ENCODE measurements at regions of chr1 and their contacts with region 1.

Region 1: GRCh38 chr1:37673920-37674319 is 18.4 kb upstream of the CDCA8 start:
- DNase-seq: no peak
- ATAC-seq: no peak
- H3K4me3 ChIP-seq: no peak overlapping the region
- H3K27ac ChIP-seq: no peak overlapping the region
- H3K4me1 ChIP-seq: no peaks in the 10 kb centered on the region
- H3K27me3 ChIP-seq: peaks cover 49% of the 10 kb centered on the region
- CTCF ChIP-seq: no peak
- POLR2A ChIP-seq: no peak
- RAD21 ChIP-seq: no peak

Region 2: DNA sequence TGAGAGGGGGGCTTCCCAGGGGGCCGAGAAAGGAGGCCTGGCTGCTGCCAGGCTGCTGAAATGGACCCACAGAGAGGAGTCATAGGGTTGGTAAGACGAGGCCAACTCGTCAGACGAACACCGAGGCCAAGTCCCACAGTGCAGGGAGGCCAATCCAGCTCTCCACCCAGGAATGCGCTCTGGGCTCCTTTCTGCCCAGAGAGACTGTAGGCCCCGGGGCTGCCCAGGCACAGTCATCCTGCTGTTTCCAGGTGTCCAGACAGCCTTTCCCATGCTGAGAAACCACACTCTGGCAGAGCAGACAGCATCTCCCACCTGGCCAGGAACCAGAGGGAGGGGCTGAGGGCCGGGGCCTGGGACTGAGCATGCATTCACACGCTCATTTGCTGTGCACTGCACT is 12.5 kb before region 1 on chr1:
- CTCF ChIA-PET with region 1: no interaction called
- POLR2A ChIA-PET with region 1: no interaction called
- dilution Hi-C with region 1: no loop called
- in situ Hi-C with region 1: no loop called
- intact Hi-C with region 1: loop called (anchors 1 kb)
- DNase-seq: peak; percentile 7
- ATAC-seq: peak; percentile 34; the same call in 1 of the 2 replicates
- H3K4me3 ChIP-seq: no peak overlapping the region
- H3K27ac ChIP-seq: no peak overlapping the region
- H3K4me1 ChIP-seq: no peaks in the 10 kb centered on the region
- H3K27me3 ChIP-seq: peaks cover 40% of the 10 kb centered on the region
- CTCF ChIP-seq: no peak
- POLR2A ChIP-seq: no peak
- RAD21 ChIP-seq: no peak